ENCODE measurements at regions of chr19 and their contacts with region 1.

Region 1: GRCh38 chr19:29771708-29772414 is 39.9 kb upstream of the CCNE1 start:
- DNase-seq: peak; percentile 79
- H3K4me3 Mint-ChIP-seq: no peak overlapping the region
- H3K27ac Mint-ChIP-seq: no peak overlapping the region
- H3K4me1 Mint-ChIP-seq: no peaks in the 10 kb centered on the region
- H3K27me3 Mint-ChIP-seq: peaks cover 21% of the 10 kb centered on the region
- CTCF ChIP-seq: peak; percentile 57

Region 2: DNA sequence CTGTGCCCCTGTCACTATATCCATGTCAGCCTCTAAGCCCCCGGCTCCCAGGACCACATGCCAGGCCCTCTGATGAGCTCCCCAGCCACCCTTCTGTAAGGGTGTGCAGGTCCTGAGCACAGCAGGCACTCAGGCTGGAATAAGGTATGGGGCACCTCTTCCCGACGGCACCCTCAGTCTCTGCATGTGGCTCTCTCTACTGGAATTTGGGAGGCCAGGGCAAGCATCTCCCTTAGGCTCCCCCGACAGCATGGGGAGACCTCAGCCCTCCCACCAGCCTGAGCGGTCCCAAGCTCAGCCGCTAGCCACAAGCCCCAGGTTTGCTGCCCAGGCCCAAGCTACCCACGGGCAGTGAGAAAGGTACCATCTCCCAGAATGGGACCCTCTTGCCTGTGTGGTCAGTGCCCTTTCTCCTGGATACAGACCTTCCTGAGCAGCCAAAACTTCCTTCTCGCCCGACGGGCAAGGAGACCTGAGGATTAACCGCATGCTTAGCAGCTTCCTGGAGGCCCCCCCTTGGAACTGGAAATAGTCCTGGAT is 34.3 kb before region 1 on chr19:
- CTCF ChIA-PET with region 1: no interaction called
- intact Hi-C with region 1: no loop called
- DNase-seq: no peak
- H3K4me3 Mint-ChIP-seq: no peak overlapping the region
- H3K27ac Mint-ChIP-seq: no peak overlapping the region
- H3K4me1 Mint-ChIP-seq: no peaks in the 10 kb centered on the region
- H3K27me3 Mint-ChIP-seq: peaks cover 99% of the 10 kb centered on the region
- CTCF ChIP-seq: no peak

Region 3: DNA sequence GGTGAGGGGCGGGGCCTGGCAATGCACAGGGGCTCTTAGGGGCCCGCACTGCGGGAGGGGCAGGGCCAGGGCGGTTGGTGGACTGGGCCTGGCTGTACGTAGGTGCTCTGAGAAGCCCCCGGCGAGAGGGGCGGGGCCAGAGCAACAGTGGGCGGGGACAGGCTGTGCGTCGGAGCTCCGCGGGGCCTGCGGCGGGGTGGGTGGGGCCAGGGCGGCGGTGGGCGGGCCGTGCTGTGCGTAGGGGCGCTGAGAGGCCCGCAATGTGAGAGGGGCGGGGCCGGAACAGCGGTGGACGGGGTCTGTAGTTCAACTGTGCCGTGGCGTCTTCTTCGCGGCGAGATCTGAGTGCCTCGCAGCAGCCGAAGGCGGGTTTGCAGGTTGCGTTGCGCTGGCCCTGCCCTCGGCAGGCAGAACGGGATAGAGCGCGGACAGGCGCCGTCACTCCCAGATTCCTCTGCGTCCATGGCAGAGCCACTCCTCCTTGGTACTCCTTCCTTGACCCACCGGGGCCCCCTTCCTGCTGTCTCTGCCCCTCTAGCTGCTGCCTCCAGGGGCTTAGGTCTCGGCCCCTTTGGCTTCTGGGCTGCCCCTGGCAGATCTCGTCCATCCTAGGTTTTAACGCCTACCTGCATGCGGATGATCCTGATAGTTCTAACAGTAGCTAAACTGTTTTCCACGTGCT is 73.2 kb after region 1 on chr19:
- CTCF ChIA-PET with region 1: interaction called, 4 read pairs
- intact Hi-C with region 1: loop called (anchors 1 kb)
- DNase-seq: peak; percentile 96
- H3K4me3 Mint-ChIP-seq: peak overlapping the region; percentile 80
- H3K27ac Mint-ChIP-seq: peak overlapping the region; percentile 63
- H3K4me1 Mint-ChIP-seq: peaks cover 19% of the 10 kb centered on the region
- H3K27me3 Mint-ChIP-seq: peaks cover 42% of the 10 kb centered on the region
- CTCF ChIP-seq: no peak